ENCODE measurements at regions of chr4 and their contacts with region 1.

Region 1: DNA sequence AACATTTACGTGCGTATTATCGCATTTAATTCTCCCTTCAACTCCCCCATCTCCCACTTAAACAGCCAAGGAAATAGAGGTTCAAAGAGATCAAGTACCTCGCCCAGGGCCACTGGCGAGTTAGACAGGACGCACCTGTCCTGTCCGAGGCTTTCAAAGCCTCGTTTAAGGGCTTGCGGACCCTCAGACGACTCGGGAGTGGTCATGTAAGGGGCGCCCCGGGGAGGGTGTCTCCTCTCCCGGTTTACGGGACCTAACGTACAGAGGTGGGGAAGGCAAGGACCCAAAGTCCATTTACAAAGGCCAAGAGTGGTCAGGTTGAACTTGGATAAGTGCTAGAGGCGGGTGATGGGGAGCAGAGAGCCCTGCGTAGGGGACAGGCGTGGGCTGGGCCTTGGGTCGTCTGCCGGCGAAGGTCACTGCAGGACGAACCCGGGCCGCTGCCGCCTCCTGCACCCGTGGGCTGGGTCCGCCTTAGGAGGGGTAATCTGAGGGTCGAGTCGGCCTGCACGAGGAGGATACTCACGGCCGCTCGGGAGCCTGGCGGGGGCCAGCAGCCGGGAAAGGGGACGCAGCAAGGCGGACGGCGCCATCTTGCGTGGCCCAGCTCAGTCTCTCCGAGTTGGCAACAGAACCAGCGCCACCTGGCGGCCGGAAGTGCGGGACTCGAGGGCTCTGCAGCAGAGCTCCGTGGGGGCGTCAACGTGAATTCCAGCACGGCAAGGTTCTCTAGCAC is 5.9 kb upstream of the NAA15 start:
- DNase-seq: peak; percentile 63
- H3K4me3 ChIP-seq: peak overlapping the region; percentile 76
- CTCF ChIP-seq: peak; percentile 97

Region 2: GRCh38 chr4:139030614-139031235 is 264.6 kb before region 1 on chr4:
- CTCF ChIA-PET with region 1: interaction called, 27 read pairs
- POLR2A ChIA-PET with region 1: interaction called, 3 read pairs
- DNase-seq: no peak
- H3K4me3 ChIP-seq: no peak overlapping the region
- CTCF ChIP-seq: peak; percentile 80

Region 3: DNA sequence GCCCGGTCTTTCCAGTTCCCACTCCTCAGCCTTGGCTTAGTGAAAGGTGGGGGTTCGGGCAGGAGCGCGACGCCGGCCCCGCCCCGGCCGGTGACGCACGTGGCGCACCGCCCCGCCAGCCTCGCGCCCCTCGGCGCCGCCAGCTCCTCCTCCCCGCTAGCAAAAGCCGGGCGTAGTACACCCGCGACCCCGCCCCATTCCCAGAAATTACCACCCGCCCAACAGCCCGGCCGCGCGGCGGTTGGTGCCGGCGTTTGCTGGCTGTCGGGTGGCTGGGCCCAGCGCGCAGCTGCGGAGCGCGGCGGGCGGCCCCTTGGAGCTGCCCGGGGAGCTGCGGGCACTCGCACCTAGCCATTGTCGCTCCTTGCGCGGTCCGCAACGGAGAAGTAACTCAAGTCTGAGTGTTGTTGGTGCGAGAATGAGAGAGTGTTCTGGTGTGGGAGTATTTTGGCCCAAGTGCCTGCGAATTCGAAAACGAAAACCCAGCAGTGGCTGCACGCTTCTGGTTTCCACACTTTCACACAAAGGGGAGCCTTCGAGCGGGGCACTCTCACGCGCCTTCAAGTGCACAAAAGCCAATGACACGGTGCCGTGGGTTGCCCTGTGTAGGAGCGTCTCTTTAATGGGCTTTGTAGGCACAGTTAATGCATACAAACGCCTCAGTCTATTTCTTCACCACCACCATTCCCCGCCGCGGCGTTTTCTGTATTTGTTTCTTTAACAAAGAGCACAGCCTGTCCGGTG is 117.3 kb before region 1 on chr4:
- CTCF ChIA-PET with region 1: interaction called, 22 read pairs
- POLR2A ChIA-PET with region 1: no interaction called
- DNase-seq: peak; percentile 38
- H3K4me3 ChIP-seq: peak overlapping the region; percentile 86
- CTCF ChIP-seq: no peak

Region 4: GRCh38 chr4:139223682-139224317 is 71.6 kb before region 1 on chr4:
- CTCF ChIA-PET with region 1: interaction called, 24 read pairs
- POLR2A ChIA-PET with region 1: no interaction called
- DNase-seq: peak; percentile 10
- H3K4me3 ChIP-seq: no peak overlapping the region
- CTCF ChIP-seq: no peak

Region 5: GRCh38 chr4:139243448-139244365 is 51.7 kb before region 1 on chr4:
- CTCF ChIA-PET with region 1: interaction called, 13 read pairs
- POLR2A ChIA-PET with region 1: interaction called, 3 read pairs
- DNase-seq: peak; percentile 97
- H3K4me3 ChIP-seq: no peak overlapping the region
- CTCF ChIP-seq: no peak

Region 6: GRCh38 chr4:139312552-139313332 is 17.4 kb after region 1 on chr4:
- CTCF ChIA-PET with region 1: interaction called, 29 read pairs
- POLR2A ChIA-PET with region 1: interaction called, 7 read pairs
- DNase-seq: no peak
- H3K4me3 ChIP-seq: no peak overlapping the region
- CTCF ChIP-seq: no peak